ENCODE measurements at regions of chr10 and their contacts with region 1.

Region 1: DNA sequence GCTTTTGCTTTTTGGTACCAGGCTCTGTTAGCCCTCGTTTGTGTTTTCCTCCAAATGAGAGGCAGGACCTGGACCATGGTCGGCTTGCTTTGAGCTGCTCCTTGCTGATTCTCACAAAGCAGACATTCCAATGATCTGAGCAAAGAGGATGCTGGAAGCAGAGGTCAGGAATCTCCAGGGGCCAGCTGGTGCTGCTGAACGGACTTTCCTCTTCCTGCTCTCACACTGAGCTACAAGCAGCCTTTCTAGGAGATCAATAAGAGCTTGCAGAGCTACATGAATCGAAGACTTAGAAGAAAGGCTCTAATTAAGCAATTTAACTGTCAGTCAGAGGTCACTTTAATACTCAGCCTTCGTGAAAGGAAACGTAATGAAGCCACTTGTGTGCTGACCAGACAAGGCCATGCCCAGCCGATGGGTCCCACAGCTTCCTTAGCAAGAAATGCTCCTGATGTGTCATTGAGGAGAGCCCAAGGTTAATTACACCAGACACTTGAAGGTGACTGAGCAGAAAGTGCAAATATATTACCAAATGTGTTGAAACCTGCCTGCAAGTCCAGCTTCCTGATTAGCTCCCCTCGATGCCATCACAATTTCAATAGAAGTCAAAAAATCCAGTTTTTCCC is 151.3 kb upstream of the RSU1 start:
- DNase-seq: no peak
- H3K4me3 ChIP-seq: no peak overlapping the region
- H3K27me3 ChIP-seq: no peaks in the 10 kb centered on the region
- CTCF ChIP-seq: no peak

Region 2: GRCh38 chr10:17138460-17139042 is 170.0 kb after region 1 on chr10:
- CTCF ChIA-PET with region 1: no interaction called
- POLR2A ChIA-PET with region 1: interaction called, 12 read pairs
- DNase-seq: no peak
- H3K4me3 ChIP-seq: no peak overlapping the region
- H3K27me3 ChIP-seq: no peaks in the 10 kb centered on the region
- CTCF ChIP-seq: no peak